CD8-positive, alpha-beta memory T cell (primary cell): ENCODE measurements at regions of chr9 and their contacts with region 1.

Region 1: DNA sequence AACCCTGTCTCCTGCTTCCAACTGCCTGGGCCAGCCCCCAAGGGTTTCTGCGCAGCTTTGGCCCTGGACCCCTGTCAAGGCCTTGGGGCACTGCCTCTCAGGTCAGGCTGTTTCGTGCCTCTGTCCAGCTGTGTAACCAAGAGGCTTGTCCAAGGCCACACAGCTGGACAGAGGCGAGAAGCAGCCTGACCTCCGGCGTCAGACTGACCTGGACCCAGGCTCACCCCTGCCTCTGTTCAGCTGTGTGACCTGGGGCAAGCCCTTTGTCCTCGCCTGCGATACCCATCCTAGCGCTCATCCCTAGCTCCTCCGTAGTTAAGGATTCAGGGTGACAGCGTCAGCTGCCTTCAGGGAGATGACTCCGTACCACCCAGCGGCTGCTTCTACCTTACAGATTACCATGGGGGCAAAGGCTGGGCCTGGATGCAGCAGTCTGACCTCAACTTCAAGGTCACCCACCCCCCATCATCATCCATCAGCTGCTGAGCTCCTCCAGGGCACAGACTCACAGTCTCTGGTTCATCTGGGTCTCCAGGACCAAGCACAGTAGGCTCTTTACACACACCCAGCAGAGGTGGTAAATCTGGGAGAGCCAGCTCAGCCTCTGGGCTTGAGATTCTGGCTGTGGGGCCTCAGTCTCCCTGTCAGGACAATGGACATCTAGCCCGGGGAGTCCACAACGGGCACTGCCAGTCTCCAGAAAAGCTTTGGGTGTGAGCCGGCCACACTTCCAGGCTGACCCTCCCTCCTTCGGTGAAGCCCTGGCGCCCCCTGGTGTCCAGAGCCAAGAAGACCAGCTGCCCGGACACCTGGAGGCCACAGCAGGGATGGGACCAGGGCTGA is 7.9 kb downstream of the AK1 start:
- DNase-seq: peak; percentile 58 to 85 (median 71)
- H3K4me3 ChIP-seq: no peak overlapping the region
- H3K4me3 Mint-ChIP-seq: peak overlapping the region in 1 of 7 donors; percentile 9
- H3K27ac ChIP-seq: no peak overlapping the region
- H3K27ac Mint-ChIP-seq: peak overlapping the region in 4 of 8 donors; percentile 42 to 88 (median 61)
- H3K4me1 ChIP-seq: peaks cover 16% of the 10 kb centered on the region
- H3K4me1 Mint-ChIP-seq: peaks cover 16 to 18% (median 18%) of the 10 kb centered on the region in 3 donors
- H3K27me3 ChIP-seq: no peaks in the 10 kb centered on the region
- H3K27me3 Mint-ChIP-seq: no peaks in the 10 kb centered on the region

Region 2: DNA sequence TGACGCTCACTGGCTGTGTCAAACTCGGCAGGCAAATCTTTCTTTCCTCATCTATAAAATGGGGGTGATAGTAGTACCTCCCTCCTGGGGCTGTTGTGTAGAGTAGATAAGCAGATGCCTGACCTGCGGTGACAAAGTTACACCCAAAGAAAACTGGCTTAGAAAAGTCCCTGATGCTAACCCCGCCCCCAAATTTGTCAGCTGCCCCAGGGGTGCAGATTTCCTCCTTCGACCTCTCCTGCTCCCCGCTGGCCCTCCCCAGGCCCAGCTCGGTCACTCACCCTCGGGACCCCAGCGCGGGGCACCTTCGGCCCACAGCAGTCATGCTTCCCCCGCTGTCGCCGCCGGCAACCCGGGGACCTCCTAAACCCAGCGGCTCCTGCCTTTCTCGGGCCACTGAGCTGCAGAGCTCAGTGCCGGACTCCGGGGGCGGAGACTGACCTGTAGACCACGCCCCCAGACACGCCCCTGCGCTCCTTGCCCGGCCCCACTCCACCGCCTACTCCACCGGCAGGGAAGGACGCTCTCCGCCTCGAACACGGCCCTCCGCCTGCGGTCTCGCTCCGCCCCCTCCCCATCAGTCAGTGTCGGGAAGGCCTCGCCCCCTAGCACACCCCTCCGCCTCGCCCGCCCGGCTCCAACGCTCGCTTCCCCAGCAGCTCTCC is 98.5 kb before region 1 on chr9:
- CTCF ChIA-PET with region 1: interaction called, 24 read pairs
- POLR2A ChIA-PET with region 1: no interaction called
- DNase-seq: peak; percentile 85 to 96 (median 90)
- H3K4me3 ChIP-seq: peak overlapping the region; percentile 71
- H3K4me3 Mint-ChIP-seq: peak overlapping the region; percentile 80 to 96 (median 89)
- H3K27ac ChIP-seq: peak overlapping the region; percentile 77
- H3K27ac Mint-ChIP-seq: peak overlapping the region; percentile 86 to 99 (median 98)
- H3K4me1 ChIP-seq: peaks cover 73% of the 10 kb centered on the region
- H3K4me1 Mint-ChIP-seq: peaks cover 61 to 79% (median 75%) of the 10 kb centered on the region in 3 donors
- H3K27me3 ChIP-seq: no peaks in the 10 kb centered on the region
- H3K27me3 Mint-ChIP-seq: no peaks in the 10 kb centered on the region

Region 3: GRCh38 chr9:127793093-127793708 is 76.3 kb before region 1 on chr9:
- CTCF ChIA-PET with region 1: interaction called, 21 read pairs
- POLR2A ChIA-PET with region 1: no interaction called
- DNase-seq: no peak
- H3K4me3 ChIP-seq: no peak overlapping the region
- H3K4me3 Mint-ChIP-seq: no peak overlapping the region
- H3K27ac ChIP-seq: no peak overlapping the region
- H3K27ac Mint-ChIP-seq: peak overlapping the region in 1 of 8 donors; percentile 57
- H3K4me1 ChIP-seq: peaks cover 22% of the 10 kb centered on the region
- H3K4me1 Mint-ChIP-seq: peaks cover 30 to 53% (median 41%) of the 10 kb centered on the region in 3 donors
- H3K27me3 ChIP-seq: no peaks in the 10 kb centered on the region
- H3K27me3 Mint-ChIP-seq: no peaks in the 10 kb centered on the region

Region 4: DNA sequence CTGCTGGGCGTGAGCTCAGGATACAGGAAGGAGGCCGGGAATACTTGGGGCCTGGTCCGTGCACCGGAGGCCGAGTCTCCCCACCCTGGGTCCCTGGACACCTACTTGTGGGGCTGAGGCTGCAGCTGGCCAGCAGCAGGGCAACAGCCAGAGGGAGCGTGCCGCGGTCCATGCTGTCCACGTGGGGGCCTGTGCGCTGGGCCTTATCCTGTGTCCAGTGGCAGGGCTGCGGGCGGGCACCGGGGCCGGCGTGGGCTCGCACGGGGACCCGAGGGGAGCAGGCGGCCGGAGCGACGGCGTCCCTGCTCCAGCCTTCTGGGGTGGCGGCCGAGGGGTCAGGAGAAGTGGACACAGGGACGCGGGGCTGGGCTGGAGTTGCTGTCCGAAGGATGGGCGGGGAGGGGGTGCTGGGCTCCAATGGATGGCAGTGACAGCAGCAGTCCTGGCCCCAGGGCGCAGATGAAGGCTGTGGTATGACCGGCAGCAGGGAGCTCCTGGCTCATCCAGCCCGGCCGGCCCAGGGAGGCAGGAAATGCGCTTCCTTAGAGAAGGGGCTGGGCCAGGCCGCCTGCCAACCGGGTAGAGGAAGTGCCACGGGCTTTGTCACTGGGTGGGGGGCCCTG is 15.2 kb before region 1 on chr9 and contains the start of gene ENG:
- CTCF ChIA-PET with region 1: interaction called, 33 read pairs
- POLR2A ChIA-PET with region 1: no interaction called
- DNase-seq: peak in 1 of 5 donors; percentile 14
- H3K4me3 ChIP-seq: peak within 1 kb of the TSS; percentile 72
- H3K4me3 Mint-ChIP-seq: peak within 1 kb of the TSS; percentile 83 to 95 (median 85)
- H3K27ac ChIP-seq: no peak within 1 kb of the TSS
- H3K27ac Mint-ChIP-seq: peak within 1 kb of the TSS; percentile 72 to 96 (median 88)
- H3K4me1 ChIP-seq: peaks cover 25% of the 10 kb centered on the region
- H3K4me1 Mint-ChIP-seq: peaks cover 20 to 43% (median 31%) of the 10 kb centered on the region in 3 donors
- H3K27me3 ChIP-seq: no peaks in the 10 kb centered on the region
- H3K27me3 Mint-ChIP-seq: no peaks in the 10 kb centered on the region
- total RNA-seq, gene ENG: 18.9 to 19.3 TPM

Region 5: GRCh38 chr9:127916665-127917613 is 47.4 kb after region 1 on chr9 and contains the start of gene ST6GALNAC4:
- CTCF ChIA-PET with region 1: interaction called, 29 read pairs
- POLR2A ChIA-PET with region 1: interaction called, 3 read pairs
- DNase-seq: peak; percentile 89 to 96 (median 94)
- H3K4me3 ChIP-seq: peak within 1 kb of the TSS; percentile 94
- H3K4me3 Mint-ChIP-seq: peak within 1 kb of the TSS; percentile 82 to 94 (median 89)
- H3K27ac ChIP-seq: peak within 1 kb of the TSS; percentile 81
- H3K27ac Mint-ChIP-seq: peak within 1 kb of the TSS; percentile 53 to 95 (median 93)
- H3K4me1 ChIP-seq: peaks cover 52% of the 10 kb centered on the region
- H3K4me1 Mint-ChIP-seq: peaks cover 40 to 66% (median 45%) of the 10 kb centered on the region in 3 donors
- H3K27me3 ChIP-seq: no peaks in the 10 kb centered on the region
- H3K27me3 Mint-ChIP-seq: peaks cover 0 to 7% of the 10 kb centered on the region in 2 donors
- total RNA-seq, gene ST6GALNAC4: 32.9 to 43.2 TPM